PC-9 (cell line): ENCODE measurements at regions of chr11 and their contacts with region 1.

Region 1: GRCh38 chr11:57792060-57792541 is 30.5 kb downstream of the CTNND1 start:
- DNase-seq: peak in 1 of 2 experiments; percentile 36
- H3K4me3 ChIP-seq: no peak overlapping the region
- H3K27ac ChIP-seq: peak overlapping the region; percentile 49
- H3K4me1 ChIP-seq: peaks cover 54% of the 10 kb centered on the region
- H3K27me3 ChIP-seq: no peaks in the 10 kb centered on the region
- CTCF ChIP-seq: no peak

Region 2: GRCh38 chr11:57778318-57779037 is 13.6 kb before region 1 on chr11:
- CTCF ChIA-PET with region 1: interaction called, 3 read pairs
- POLR2A ChIA-PET with region 1: interaction called, 17 read pairs
- intact Hi-C with region 1: no loop called
- DNase-seq: peak; percentile 98 to 99
- H3K4me3 ChIP-seq: peak overlapping the region; percentile 50; the same call in 1 of the 2 replicates
- H3K27ac ChIP-seq: peak overlapping the region; percentile 93
- H3K4me1 ChIP-seq: peaks cover 93% of the 10 kb centered on the region
- H3K27me3 ChIP-seq: no peaks in the 10 kb centered on the region
- CTCF ChIP-seq: no peak